ENCODE measurements at regions of chr19 and their contacts with region 1.

Region 1: DNA sequence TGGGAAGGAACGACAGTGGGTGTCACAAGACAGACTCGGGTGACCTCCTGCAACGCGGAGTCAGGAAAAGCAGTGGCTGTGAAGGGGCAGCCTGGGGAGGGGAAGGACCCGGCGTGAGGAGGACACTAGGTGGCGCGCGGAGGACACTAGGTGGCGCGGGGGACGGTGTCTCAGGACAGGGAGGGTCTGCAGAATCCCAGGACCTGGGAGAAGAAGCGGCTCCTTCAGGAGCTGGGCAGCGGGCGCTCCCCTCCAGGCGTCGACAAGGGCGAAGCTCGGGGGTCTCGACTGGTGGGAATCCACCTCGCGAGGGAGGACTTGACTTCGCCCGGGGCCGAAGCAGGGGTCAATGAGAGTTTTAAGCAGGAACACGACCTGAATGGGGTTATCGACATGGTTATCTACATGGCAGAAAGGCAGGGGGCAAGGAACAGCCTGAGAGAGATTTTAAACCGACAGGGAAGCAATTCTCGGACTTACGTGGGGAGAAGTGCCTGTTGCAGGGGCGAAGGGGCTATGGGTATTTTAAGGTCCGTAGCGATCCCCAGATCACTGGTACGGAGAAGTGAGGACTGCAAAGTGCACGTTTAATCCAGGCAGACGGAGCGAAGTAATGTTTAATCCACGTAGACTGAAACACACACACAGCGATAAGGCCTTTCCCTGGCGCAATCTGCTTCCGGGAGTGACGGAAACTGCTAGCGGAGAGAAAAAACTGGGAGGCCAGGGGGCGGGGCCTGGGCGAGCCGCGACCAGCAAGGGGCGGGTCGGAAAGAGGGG is at the start of gene ZNF616:
- DNase-seq: peak; percentile 99
- H3K4me3 ChIP-seq: peak within 1 kb of the TSS; percentile 71
- H3K27ac ChIP-seq: peak within 1 kb of the TSS; percentile 98
- H3K4me1 ChIP-seq: no peaks in the 10 kb centered on the region
- H3K27me3 ChIP-seq: no peaks in the 10 kb centered on the region
- CTCF ChIP-seq: peak; percentile 65
- total RNA-seq, gene ZNF616: 6.8 to 8.5 TPM

Region 2: GRCh38 chr19:51407511-51408131 is 731.8 kb before region 1 on chr19:
- intact Hi-C with region 1: no loop called
- DNase-seq: no peak
- H3K4me3 ChIP-seq: no peak overlapping the region
- H3K27ac ChIP-seq: no peak overlapping the region
- H3K4me1 ChIP-seq: no peaks in the 10 kb centered on the region
- H3K27me3 ChIP-seq: no peaks in the 10 kb centered on the region
- CTCF ChIP-seq: peak; percentile 43

Region 3: DNA sequence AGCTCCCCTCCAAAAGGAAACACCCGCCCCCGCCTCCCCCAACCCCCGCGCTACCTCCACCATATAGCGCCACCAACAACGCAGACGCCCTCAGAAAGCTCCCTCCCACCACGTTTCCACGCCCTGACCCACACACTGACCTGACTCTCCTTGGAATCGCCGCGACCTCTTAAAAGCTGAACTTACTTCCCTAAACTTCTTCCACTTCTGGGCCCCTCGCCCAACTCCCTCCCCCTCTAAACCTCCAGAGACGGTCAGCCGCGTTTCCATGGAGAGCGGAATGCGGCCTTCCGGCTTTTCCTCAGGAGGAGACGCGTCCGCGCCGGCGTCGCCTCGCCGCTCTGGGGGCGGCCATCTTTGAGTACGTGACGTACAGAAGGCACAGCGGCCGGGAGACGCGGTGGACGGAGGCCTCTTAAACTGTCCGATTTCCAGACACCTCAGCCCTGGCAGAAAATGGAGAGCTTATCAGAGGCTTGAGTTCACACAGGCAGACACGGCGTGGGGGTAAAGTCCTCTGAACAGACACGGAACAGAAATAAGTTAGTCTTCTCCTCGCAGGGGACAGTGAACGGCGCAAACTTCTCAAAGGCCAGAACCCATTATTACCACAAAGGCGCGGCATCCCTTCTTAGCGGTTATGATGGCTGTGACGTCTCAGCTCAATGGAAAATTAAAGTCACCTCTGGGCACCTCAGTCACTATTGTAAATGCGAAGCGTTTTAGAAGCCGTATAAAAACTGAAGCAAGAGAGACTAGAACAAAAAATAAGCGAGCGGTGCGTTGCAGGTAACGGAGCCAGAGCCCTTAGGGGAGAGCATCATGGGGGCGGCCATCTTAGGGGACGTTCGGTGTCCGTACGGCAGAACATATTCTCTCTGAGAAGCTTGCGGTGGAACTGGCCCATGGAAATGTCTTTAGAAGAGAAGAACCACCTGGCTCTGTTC is 90.6 kb before region 1 on chr19 and contains the start of gene ZNF432:
- intact Hi-C with region 1: no loop called
- DNase-seq: peak; percentile 92
- H3K4me3 ChIP-seq: peak within 1 kb of the TSS; percentile 51
- H3K27ac ChIP-seq: peak within 1 kb of the TSS; percentile 90
- H3K4me1 ChIP-seq: no peaks in the 10 kb centered on the region
- H3K27me3 ChIP-seq: no peaks in the 10 kb centered on the region
- CTCF ChIP-seq: no peak
- total RNA-seq, gene ZNF432: 7.7 to 7.8 TPM

Region 4: GRCh38 chr19:52189735-52190486 is 50.5 kb after region 1 on chr19 and contains the start of gene PPP2R1A:
- intact Hi-C with region 1: loop called (anchors 5 kb)
- DNase-seq: peak; percentile 100
- H3K4me3 ChIP-seq: peak within 1 kb of the TSS; percentile 67
- H3K27ac ChIP-seq: peak within 1 kb of the TSS; percentile 98
- H3K4me1 ChIP-seq: peaks cover 11% of the 10 kb centered on the region
- H3K27me3 ChIP-seq: no peaks in the 10 kb centered on the region
- CTCF ChIP-seq: no peak
- total RNA-seq, gene PPP2R1A: 273 to 378 TPM

Region 5: GRCh38 chr19:52237771-52238400 is 98.4 kb after region 1 on chr19:
- intact Hi-C with region 1: loop called (anchors 2 kb)
- DNase-seq: peak; percentile 53
- H3K4me3 ChIP-seq: no peak overlapping the region
- H3K27ac ChIP-seq: no peak overlapping the region
- H3K4me1 ChIP-seq: no peaks in the 10 kb centered on the region
- H3K27me3 ChIP-seq: no peaks in the 10 kb centered on the region
- CTCF ChIP-seq: peak; percentile 88